ENCODE measurements at regions of chr1 and their contacts with region 1.

Region 1: DNA sequence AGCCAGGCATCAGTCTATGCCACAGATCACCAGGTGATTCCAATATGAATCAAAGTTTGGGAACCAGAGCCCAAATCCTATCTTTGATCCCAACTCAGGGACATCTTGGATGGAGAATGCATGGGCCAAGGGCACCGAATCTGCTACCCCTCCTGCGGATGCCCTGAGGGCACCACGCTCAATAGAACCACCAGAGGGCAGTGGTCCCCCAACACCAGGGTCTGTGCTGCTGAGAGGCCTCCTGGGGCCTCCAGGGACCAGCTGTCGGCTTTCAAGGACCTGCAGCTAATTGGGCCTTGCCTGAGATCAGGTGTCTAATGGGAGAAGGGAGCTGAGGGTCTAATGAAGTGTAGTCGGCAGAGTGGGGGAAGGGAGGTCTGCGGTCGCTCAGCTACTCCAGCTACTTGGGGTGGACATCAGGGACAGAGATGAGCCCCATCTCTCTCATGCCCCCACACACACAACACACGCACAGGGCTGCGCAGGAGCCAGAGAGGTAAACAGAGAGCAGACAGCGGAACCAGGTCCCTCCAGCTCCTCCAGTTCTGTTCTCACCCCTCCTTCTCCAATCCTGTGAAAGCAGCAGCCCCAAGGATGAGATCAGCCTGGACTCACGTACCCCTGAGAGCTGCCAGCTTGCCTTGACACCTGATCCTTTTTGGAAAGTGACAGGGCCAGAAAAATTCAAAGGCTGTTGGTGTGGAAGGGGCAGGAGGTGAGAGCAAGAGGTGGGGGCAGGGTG is 34.9 kb upstream of the PPP1R15B start:
- DNase-seq: peak; percentile 75 to 89
- ATAC-seq: peak; percentile 68 to 84 (median 76)
- H3K4me3 ChIP-seq: peak overlapping the region; percentile 16
- H3K27ac ChIP-seq: peak overlapping the region; percentile 66
- H3K4me1 ChIP-seq: peaks cover 71% of the 10 kb centered on the region
- H3K27me3 ChIP-seq: no peaks in the 10 kb centered on the region
- CTCF ChIP-seq: peak; percentile 91

Region 2: DNA sequence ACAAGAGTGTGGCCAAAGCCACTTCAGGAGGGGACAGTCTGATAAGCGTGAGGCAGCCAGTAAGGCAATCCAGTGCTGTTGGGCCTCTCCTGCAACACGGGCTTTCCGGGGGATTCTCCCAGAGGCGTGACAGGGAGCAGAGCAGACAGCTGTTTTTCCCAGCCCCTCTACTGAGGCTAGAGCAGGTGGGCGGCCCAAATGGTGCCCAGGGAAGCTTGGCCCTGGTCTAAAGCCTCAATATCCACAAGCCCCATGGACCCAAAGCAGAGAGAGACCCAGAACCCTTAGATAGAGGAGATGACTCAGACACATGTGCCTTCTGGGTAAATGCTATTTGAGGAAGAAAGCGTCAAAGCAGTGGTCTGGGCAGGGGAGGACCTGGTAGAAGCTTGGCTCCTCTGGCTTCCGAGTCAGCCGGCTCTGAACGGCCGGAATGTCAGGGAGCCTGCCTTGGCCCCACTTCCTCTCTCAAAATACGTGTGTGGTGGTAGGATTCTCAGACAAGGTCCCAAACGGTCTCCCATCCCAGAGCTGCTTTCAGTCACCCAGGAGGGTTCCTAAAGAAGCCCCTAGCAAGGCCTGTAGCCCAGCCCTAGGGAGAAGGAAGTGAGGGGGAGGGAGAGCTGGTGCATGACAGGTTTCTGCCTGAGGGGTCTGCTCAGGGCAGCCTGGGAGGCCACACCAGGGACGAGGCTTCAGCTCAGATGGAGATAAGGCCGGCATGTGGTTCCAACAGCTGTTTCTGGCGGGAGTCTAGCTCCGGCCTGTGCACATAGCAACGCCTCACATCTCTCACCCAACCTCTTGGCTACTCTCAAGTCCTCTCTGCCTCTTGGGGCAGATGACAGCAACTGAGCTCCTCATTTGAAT is 19.2 kb after region 1 on chr1:
- intact Hi-C with region 1: loop called in 1 of 2 experiments (anchors 2 kb)
- DNase-seq: peak in 1 of 2 donors; percentile 56
- ATAC-seq: peak; percentile 31 to 54 (median 48)
- H3K4me3 ChIP-seq: peak overlapping the region; percentile 67
- H3K27ac ChIP-seq: peak overlapping the region; percentile 82
- H3K4me1 ChIP-seq: peaks cover 65% of the 10 kb centered on the region
- H3K27me3 ChIP-seq: no peaks in the 10 kb centered on the region
- CTCF ChIP-seq: no peak

Region 3: GRCh38 chr1:204494281-204495077 is 47.9 kb after region 1 on chr1 and contains the start of gene PIK3C2B:
- intact Hi-C with region 1: loop called in 1 of 2 experiments (anchors 2 kb)
- DNase-seq: peak; percentile 84 to 93
- ATAC-seq: peak; percentile 97 to 98 (median 97)
- H3K4me3 ChIP-seq: peak within 1 kb of the TSS; percentile 87
- H3K27ac ChIP-seq: peak within 1 kb of the TSS; percentile 79
- H3K4me1 ChIP-seq: peaks cover 20% of the 10 kb centered on the region
- H3K27me3 ChIP-seq: no peaks in the 10 kb centered on the region
- CTCF ChIP-seq: peak; percentile 73
- total RNA-seq, gene PIK3C2B: 8.2 to 20.9 (median 13.9) TPM

Region 4: GRCh38 chr1:204503122-204503912 is 56.8 kb after region 1 on chr1:
- intact Hi-C with region 1: loop called (anchors 1 to 2 kb)
- DNase-seq: no peak
- ATAC-seq: peak in 1 of 4 donors; percentile 21
- H3K4me3 ChIP-seq: no peak overlapping the region
- H3K27ac ChIP-seq: no peak overlapping the region
- H3K4me1 ChIP-seq: peaks cover 16% of the 10 kb centered on the region
- H3K27me3 ChIP-seq: no peaks in the 10 kb centered on the region
- CTCF ChIP-seq: peak; percentile 87

Region 5: DNA sequence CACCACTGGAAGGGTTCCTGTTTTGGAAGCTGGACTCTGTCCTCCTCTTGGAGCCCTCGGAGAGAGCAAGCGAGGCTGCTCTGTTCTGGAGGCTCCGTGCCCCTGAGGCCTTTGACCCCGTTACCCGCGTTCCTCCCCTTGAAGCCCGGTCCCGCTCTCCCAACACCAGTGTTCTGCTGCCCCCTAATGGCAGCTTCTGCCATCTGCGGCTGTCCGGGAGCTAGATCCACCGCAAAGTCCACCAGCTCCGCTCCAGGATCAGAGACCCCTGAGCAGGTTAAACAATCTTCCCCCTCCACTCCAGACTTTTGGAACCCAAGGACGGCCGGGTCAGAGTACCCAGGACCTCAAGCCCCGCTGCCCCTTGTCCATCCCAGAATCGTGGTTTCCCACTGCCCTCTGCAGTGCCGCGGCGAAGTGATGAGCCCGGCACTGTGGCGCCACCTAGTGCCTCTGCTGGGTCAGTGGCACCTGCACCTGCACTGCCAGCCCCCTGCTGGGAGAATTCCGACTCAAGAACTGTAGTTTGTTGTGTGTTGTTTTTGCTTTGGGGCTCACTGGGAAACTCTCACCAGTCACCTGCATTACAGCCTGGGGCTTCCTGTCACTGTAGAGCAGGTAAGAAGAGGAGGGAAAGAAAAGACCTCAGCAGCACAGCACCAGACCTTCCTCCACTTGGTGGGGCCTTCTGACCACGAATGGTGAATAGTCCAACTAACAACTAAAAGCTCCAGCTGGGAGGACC is 360.6 kb after region 1 on chr1:
- intact Hi-C with region 1: loop called in 1 of 2 experiments (anchors 10 kb)
- DNase-seq: peak; percentile 82 to 86
- ATAC-seq: peak; percentile 92 to 98 (median 94)
- H3K4me3 ChIP-seq: peak overlapping the region; percentile 60
- H3K27ac ChIP-seq: no peak overlapping the region
- H3K4me1 ChIP-seq: no peaks in the 10 kb centered on the region
- H3K27me3 ChIP-seq: no peaks in the 10 kb centered on the region
- CTCF ChIP-seq: peak; percentile 84

Measured in psoas muscle (tissue), 8 donors.